Heart left ventricle (tissue), 16 donors: ENCODE measurements at regions of chr3 and their contacts with region 1.

Region 1: DNA sequence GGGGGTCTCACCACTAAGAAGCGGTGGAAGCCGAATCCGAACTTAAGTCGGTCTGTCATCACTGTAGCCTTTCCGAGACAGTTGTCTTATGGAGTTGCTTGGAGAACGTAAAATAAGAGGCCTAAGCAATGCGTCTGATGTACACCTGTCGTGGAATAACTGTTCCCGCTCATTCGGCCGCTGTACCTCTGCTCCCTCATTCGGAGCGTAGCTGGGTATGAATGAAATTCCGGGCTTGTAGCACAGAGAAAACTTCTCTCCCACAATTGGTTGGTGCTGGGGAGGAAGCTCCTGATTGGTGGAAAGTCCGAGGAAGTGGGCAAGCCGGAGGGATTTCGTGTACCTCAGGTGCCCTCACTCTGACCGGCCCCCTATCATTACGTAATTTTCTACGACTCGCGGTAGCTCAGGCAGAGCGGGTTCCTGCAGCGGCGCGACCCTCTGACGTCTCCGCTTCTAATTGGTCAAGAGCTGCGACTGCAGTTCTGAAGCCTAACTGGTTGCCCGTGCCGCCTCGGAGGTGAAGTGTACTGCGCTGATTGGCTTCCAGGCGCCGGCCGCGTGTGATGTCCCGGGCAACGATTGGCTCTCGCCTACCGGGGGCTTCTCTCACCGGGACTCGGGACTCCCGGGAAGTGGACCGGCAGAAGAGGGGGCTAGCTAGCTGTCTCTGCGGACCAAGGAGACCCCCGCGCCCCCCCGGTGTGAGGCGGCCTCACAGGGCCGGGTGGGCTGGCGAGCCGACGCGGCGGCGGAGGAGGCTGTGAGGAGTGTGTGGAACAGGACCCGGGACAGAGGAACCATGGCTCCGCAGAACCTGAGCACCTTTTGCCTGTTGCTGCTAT is at the start of gene DNAJB11:
- DNase-seq: peak; percentile 99 to 100 (median 99)
- ATAC-seq: peak; percentile 94 to 97 (median 96)
- H3K4me3 ChIP-seq: peak within 1 kb of the TSS; percentile 71 to 99 (median 90)
- H3K27ac ChIP-seq: peak within 1 kb of the TSS; percentile 43 to 95 (median 88)
- H3K4me1 ChIP-seq: peaks cover 5 to 47% (median 32%) of the 10 kb centered on the region in 12 donors
- H3K27me3 ChIP-seq: no peaks in the 10 kb centered on the region
- CTCF ChIP-seq: no peak
- POLR2A ChIP-seq: peak in 1 of 2 donors; percentile 68
- total RNA-seq, gene DNAJB11: 17.3 to 37.7 (median 25.2) TPM

Region 2: GRCh38 chr3:186783073-186783730 is 212.9 kb after region 1 on chr3 and contains the start of gene EIF4A2:
- intact Hi-C with region 1: loop called in 2 of 10 experiments (anchors 2 kb)
- DNase-seq: peak; percentile 92 to 95 (median 93)
- ATAC-seq: peak; percentile 84 to 91 (median 87)
- H3K4me3 ChIP-seq: peak within 1 kb of the TSS; percentile 71 to 97 (median 84)
- H3K27ac ChIP-seq: peak within 1 kb of the TSS; percentile 95 to 100 (median 99)
- H3K4me1 ChIP-seq: peaks cover 7 to 45% (median 35%) of the 10 kb centered on the region in 12 donors
- H3K27me3 ChIP-seq: no peaks in the 10 kb centered on the region
- CTCF ChIP-seq: peak in 1 of 12 donors; percentile 10
- POLR2A ChIP-seq: peak in 1 of 2 donors; percentile 75
- total RNA-seq, gene EIF4A2: 291 to 496 (median 375) TPM